K562 (cell line): ENCODE measurements at regions of chr7 and their contacts with region 1.

Region 1: GRCh38 chr7:139505563-139505962 is 17.9 kb upstream of the CLEC2L start:
- DNase-seq: peak; percentile 66 to 76 (median 73)
- ATAC-seq: peak; percentile 95
- H3K4me3 ChIP-seq: no peak overlapping the region
- H3K27ac ChIP-seq: no peak overlapping the region
- H3K4me1 ChIP-seq: peaks cover 2 to 4% of the 10 kb centered on the region in 2 experiments; a peak in 2 of 5 replicates
- H3K27me3 ChIP-seq: peaks cover 24 to 51% of the 10 kb centered on the region in 2 experiments
- CTCF ChIP-seq: peak; percentile 85 to 91 (median 86)
- EP300 ChIP-seq: no peak
- POLR2A ChIP-seq: no peak
- RAD21 ChIP-seq: peak; percentile 29 to 84

Region 2: GRCh38 chr7:139431010-139431409 is 74.6 kb before region 1 on chr7:
- CTCF ChIA-PET with region 1: no interaction called
- POLR2A ChIA-PET with region 1: no interaction called
- in situ Hi-C with region 1: no loop called
- intact Hi-C with region 1: loop called (anchors 2 kb)
- DNase-seq: no peak
- ATAC-seq: no peak
- H3K4me3 ChIP-seq: no peak overlapping the region
- H3K27ac ChIP-seq: no peak overlapping the region
- H3K4me1 ChIP-seq: peaks cover 4 to 5% of the 10 kb centered on the region in 2 experiments; a peak in 3 of 5 replicates
- H3K27me3 ChIP-seq: no peaks in the 10 kb centered on the region
- CTCF ChIP-seq: no peak
- EP300 ChIP-seq: no peak
- POLR2A ChIP-seq: no peak
- RAD21 ChIP-seq: no peak

Region 3: DNA sequence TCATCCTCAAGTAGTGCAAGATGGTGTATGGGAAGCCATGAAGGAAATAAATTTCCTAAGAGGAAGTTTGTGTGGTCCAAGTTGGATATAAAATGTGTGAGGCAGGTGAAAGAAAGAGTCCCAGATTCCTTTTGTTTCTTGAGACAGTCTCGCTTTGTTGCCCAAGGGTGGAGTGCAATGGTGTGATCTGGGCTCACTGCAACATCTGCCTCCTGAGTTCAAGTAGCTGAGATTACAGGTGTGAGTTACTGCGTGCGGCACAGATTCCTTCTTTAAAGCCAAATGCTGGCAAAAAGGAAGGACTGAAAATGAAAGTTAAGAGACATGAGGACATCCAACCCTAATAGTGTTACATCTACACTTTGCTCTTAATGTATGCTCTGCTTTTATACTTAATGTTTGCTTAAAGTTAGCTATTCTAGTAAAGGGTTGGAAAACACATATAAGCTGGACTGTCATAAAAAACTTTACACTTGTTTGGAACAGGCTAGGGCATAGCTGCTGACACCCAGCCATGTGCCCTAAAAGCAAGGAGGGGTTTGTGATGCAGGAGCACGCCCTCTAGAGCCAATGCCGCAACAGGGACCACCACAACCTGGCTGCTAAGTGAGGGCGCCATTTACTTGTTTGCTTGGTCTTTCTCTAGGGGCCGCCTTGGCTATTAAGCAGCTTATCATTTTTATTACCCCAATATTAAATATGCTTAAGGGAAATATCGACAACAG is 52.5 kb after region 1 on chr7:
- CTCF ChIA-PET with region 1: no interaction called
- POLR2A ChIA-PET with region 1: interaction called, 4 read pairs
- in situ Hi-C with region 1: no loop called
- intact Hi-C with region 1: loop called (anchors 2 kb)
- DNase-seq: peak in 1 of 4 experiments; percentile 37
- ATAC-seq: peak; percentile 66
- H3K4me3 ChIP-seq: no peak overlapping the region
- H3K27ac ChIP-seq: no peak overlapping the region
- H3K4me1 ChIP-seq: peaks cover 0 to 7% of the 10 kb centered on the region in 2 experiments; a peak in 2 of 5 replicates
- H3K27me3 ChIP-seq: peaks cover 19 to 25% of the 10 kb centered on the region in 2 experiments; a peak in 4 of 5 replicates
- CTCF ChIP-seq: peak; percentile 59 to 77 (median 60)
- EP300 ChIP-seq: no peak
- POLR2A ChIP-seq: no peak
- RAD21 ChIP-seq: peak in 1 of 2 experiments; percentile 49; a peak in 2 of 4 replicates

Region 4: GRCh38 chr7:139570119-139570518 is 64.6 kb after region 1 on chr7:
- CTCF ChIA-PET with region 1: interaction called, 20 read pairs
- POLR2A ChIA-PET with region 1: interaction called, 5 read pairs
- in situ Hi-C with region 1: no loop called
- intact Hi-C with region 1: loop called (anchors 2 kb)
- DNase-seq: peak in 1 of 4 experiments; percentile 24
- ATAC-seq: no peak; the same call in 2 of the 3 replicates
- H3K4me3 ChIP-seq: no peak overlapping the region
- H3K27ac ChIP-seq: no peak overlapping the region
- H3K4me1 ChIP-seq: peaks cover 0 to 12% of the 10 kb centered on the region in 2 experiments; a peak in 2 of 5 replicates
- H3K27me3 ChIP-seq: peaks cover 0 to 15% of the 10 kb centered on the region in 2 experiments; a peak in 1 of 5 replicates
- CTCF ChIP-seq: peak; percentile 31 to 55 (median 37); a peak in 4 of 6 replicates
- EP300 ChIP-seq: no peak
- POLR2A ChIP-seq: no peak
- RAD21 ChIP-seq: peak; percentile 41 to 47

Region 5: DNA sequence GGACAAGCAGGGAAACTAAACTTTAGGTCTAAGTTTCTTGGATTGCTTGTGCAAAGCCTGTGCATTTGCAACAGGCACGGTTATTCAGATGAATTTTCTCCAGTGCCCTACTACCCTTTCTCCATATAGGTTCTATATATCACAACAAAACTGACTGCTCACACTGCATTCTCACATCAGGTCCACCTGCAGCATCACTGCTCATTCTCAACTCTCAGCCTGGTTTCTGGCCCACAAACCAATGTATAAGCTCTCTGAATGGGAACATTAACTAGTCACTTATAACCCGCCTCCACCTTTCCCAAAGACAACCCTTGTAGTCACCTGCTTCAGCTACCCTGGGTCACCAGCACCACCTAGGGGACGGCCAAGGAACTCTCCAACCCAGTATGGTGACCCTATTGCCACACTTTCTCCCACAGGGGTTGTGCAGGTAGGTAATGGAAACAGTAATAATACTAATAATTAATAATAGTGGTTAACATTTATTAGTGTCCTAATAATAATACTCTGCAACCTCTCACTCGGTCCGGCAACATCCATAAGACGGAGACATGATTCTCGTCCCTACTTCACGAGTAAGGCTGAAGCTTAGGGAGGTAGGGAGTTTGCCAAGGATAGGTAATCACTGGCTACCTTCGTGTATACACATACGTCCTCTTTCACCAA is 115.2 kb after region 1 on chr7:
- CTCF ChIA-PET with region 1: interaction called, 10 read pairs
- POLR2A ChIA-PET with region 1: no interaction called
- in situ Hi-C with region 1: no loop called
- intact Hi-C with region 1: loop called (anchors 2 kb)
- DNase-seq: peak; percentile 75 to 91 (median 83)
- ATAC-seq: peak; percentile 94
- H3K4me3 ChIP-seq: no peak overlapping the region
- H3K27ac ChIP-seq: no peak overlapping the region
- H3K4me1 ChIP-seq: peaks cover 0 to 6% of the 10 kb centered on the region in 2 experiments; a peak in 2 of 5 replicates
- H3K27me3 ChIP-seq: no peaks in the 10 kb centered on the region
- CTCF ChIP-seq: peak; percentile 91 to 97 (median 95)
- EP300 ChIP-seq: 0 out of 2 replicates have a peak, but pooled peaks have one; percentile 7
- POLR2A ChIP-seq: no peak
- RAD21 ChIP-seq: peak; percentile 80 to 84